Left lung (tissue), 14 donors: ENCODE measurements at regions of chr19 and their contacts with region 1.

Region 1: GRCh38 chr19:33771384-33772101 is 25.1 kb upstream of the KCTD15 start:
- DNase-seq: peak in 3 of 4 donors; percentile 31 to 66 (median 61)
- ATAC-seq: peak; percentile 91
- H3K4me3 ChIP-seq: no peak overlapping the region
- H3K27ac ChIP-seq: no peak overlapping the region
- H3K4me1 ChIP-seq: no peaks in the 10 kb centered on the region
- H3K27me3 ChIP-seq: peaks cover 0 to 56% of the 10 kb centered on the region in 2 donors
- CTCF ChIP-seq: peak; percentile 71 to 84

Region 2: DNA sequence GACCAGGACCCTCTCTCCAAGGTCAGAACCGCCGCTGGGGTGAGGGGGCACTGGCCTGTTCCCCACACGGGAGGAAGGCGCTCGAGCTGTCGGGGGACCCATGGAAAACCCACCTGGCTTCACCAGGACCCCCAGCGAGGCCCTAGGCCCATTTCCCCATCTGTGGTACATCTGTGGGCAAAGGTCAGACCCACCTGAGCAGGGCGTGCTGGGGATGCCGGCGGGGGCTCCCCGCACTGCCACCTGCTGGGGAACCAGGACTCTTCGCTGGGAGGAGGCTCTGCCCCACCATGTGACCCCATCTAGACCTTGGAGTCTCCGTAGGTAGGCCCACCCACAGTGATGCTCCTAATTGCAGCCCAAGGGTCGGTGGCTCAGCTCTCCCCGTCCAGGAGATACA is 639.1 kb before region 1 on chr19:
- intact Hi-C with region 1: loop called in 1 of 2 experiments (anchors 10 kb)
- DNase-seq: no peak
- ATAC-seq: no peak
- H3K4me3 ChIP-seq: no peak overlapping the region
- H3K27ac ChIP-seq: no peak overlapping the region
- H3K4me1 ChIP-seq: no peaks in the 10 kb centered on the region
- H3K27me3 ChIP-seq: peaks cover 5 to 41% of the 10 kb centered on the region in 2 donors
- CTCF ChIP-seq: no peak

Region 3: GRCh38 chr19:33235269-33235995 is 536.1 kb before region 1 on chr19:
- intact Hi-C with region 1: loop called in 1 of 2 experiments (anchors 5 kb)
- DNase-seq: peak in 3 of 4 donors; percentile 67 to 95 (median 81)
- ATAC-seq: peak; percentile 89
- H3K4me3 ChIP-seq: no peak overlapping the region
- H3K27ac ChIP-seq: no peak overlapping the region
- H3K4me1 ChIP-seq: peaks cover 0 to 19% of the 10 kb centered on the region in 2 donors
- H3K27me3 ChIP-seq: peaks cover 0 to 20% of the 10 kb centered on the region in 2 donors
- CTCF ChIP-seq: peak; percentile 77 to 93

Region 4: GRCh38 chr19:33430674-33431277 is 340.8 kb before region 1 on chr19:
- intact Hi-C with region 1: loop called in 1 of 2 experiments (anchors 5 kb)
- DNase-seq: peak; percentile 45 to 85 (median 69)
- ATAC-seq: peak; percentile 92
- H3K4me3 ChIP-seq: no peak overlapping the region
- H3K27ac ChIP-seq: no peak overlapping the region
- H3K4me1 ChIP-seq: no peaks in the 10 kb centered on the region
- H3K27me3 ChIP-seq: no peaks in the 10 kb centered on the region
- CTCF ChIP-seq: peak; percentile 59 to 80

Region 5: GRCh38 chr19:33988586-33988985 is 217.0 kb after region 1 on chr19:
- intact Hi-C with region 1: no loop called
- DNase-seq: no peak
- ATAC-seq: no peak
- H3K4me3 ChIP-seq: no peak overlapping the region
- H3K27ac ChIP-seq: no peak overlapping the region
- H3K4me1 ChIP-seq: no peaks in the 10 kb centered on the region
- H3K27me3 ChIP-seq: no peaks in the 10 kb centered on the region
- CTCF ChIP-seq: no peak